ENCODE measurements at regions of chr11 and their contacts with region 1.

Region 1: DNA sequence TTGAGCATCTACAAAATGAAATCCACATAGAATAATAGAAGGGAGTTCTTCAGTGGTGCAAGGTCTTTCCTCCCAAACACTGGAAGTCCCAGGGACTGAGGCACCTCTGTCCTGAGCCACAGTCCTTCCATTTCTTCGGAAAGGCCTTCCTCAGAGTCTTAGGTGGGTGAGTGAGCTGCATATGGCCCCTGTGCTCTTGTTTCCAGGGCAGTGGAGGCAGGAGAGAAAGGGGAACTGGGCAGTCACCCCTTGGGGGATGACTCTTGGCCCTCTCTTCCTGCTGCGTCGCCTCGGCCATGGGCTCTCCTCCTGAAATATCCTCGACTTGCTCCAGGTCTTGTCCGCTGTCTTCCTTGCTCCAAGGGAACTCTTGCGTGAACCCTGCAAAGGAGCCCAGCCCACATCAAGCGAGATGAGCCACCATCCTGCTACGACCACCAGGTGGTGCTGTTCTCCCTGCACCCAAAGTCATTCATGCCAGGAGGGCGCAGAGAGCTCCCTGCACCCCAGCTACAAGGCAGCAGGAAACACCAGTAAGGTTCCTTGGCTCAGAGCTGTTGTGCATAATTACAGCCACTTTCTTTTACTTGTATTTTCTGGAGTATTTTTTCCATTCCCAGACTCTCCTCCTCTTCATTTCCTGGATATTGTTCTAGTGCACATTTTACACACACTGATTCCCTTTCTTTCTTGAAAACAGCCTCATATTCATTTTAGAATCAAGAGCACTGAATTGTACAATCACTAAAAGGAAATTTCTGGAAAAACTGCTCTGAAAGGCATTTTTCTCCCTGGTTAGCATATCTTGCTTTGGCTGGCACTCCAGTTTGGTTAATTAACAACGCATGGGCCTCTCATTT is 397.8 kb downstream of the OPCML start:
- DNase-seq: peak; percentile 27 to 77 (median 56)
- ATAC-seq: peak; percentile 80 to 92 (median 88)
- H3K4me3 ChIP-seq: no peak overlapping the region
- H3K27ac ChIP-seq: no peak overlapping the region
- H3K4me1 ChIP-seq: no peaks in the 10 kb centered on the region
- H3K27me3 ChIP-seq: peaks cover 0 to 17% (median 0%) of the 10 kb centered on the region in 4 donors
- CTCF ChIP-seq: peak; percentile 76 to 93 (median 90)

Region 2: GRCh38 chr11:133834682-133835592 is 700.4 kb after region 1 on chr11:
- intact Hi-C with region 1: loop called in 1 of 3 experiments (anchors 5 kb)
- DNase-seq: peak in 1 of 6 donors; percentile 60
- ATAC-seq: peak; percentile 67 to 88 (median 83)
- H3K4me3 ChIP-seq: no peak overlapping the region
- H3K27ac ChIP-seq: no peak overlapping the region
- H3K4me1 ChIP-seq: no peaks in the 10 kb centered on the region
- H3K27me3 ChIP-seq: peaks cover 0 to 15% (median 0%) of the 10 kb centered on the region in 4 donors
- CTCF ChIP-seq: peak in 3 of 4 donors; percentile 19 to 41 (median 27)